ENCODE measurements at regions of chr9 and their contacts with region 1.

Region 1: DNA sequence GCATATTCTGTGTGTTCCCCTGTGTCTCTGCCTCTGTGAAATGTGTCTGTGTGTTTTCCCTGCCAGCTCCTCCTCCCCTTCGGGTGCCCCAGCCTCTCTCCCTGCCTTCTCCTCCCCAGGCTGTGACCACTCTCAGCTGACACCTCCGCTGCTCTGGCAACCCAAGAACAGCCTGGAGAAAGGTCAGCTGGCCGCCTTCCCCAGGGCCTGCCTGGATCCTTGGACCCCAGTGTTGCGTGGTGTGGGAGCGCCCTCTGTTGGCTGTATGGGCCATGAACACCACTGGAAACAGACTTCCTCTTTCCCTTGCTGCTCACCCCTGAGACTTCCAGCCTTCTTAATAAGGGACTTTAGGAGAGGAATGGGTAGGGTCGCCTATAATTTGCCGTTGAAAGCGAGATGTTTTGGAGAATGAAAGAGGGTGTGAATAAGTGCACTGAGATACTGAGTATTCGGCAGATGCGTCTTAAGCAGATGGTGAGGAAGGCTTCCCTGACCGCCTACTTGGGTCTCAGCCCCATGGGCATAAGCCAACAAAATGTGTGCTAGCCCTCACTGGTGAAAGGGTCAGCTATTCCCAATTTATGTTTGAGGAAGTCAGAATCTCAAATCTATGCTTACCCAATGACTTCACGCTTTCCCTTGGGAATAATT is 114.9 kb upstream of the TRIM32 start:
- DNase-seq: peak; percentile 64
- ATAC-seq: peak; percentile 84
- H3K4me3 ChIP-seq: no peak overlapping the region
- H3K27ac ChIP-seq: no peak overlapping the region
- H3K4me1 ChIP-seq: peaks cover 74% of the 10 kb centered on the region
- H3K27me3 ChIP-seq: no peaks in the 10 kb centered on the region
- CTCF ChIP-seq: peak; percentile 99
- EP300 ChIP-seq: no peak
- POLR2A ChIP-seq: no peak
- RAD21 ChIP-seq: peak; percentile 96

Region 2: GRCh38 chr9:115591584-115591984 is 980.6 kb before region 1 on chr9:
- CTCF ChIA-PET with region 1: no interaction called
- POLR2A ChIA-PET with region 1: no interaction called
- in situ Hi-C with region 1: no loop called
- intact Hi-C with region 1: loop called (anchors 5 kb)
- DNase-seq: peak; percentile 74
- ATAC-seq: peak; percentile 98
- H3K4me3 ChIP-seq: no peak overlapping the region
- H3K27ac ChIP-seq: no peak overlapping the region
- H3K4me1 ChIP-seq: no peaks in the 10 kb centered on the region
- H3K27me3 ChIP-seq: no peaks in the 10 kb centered on the region
- CTCF ChIP-seq: peak; percentile 70
- EP300 ChIP-seq: no peak
- POLR2A ChIP-seq: no peak
- RAD21 ChIP-seq: 0 out of 2 replicates have a peak, but pooled peaks have one; percentile 28

Region 3: DNA sequence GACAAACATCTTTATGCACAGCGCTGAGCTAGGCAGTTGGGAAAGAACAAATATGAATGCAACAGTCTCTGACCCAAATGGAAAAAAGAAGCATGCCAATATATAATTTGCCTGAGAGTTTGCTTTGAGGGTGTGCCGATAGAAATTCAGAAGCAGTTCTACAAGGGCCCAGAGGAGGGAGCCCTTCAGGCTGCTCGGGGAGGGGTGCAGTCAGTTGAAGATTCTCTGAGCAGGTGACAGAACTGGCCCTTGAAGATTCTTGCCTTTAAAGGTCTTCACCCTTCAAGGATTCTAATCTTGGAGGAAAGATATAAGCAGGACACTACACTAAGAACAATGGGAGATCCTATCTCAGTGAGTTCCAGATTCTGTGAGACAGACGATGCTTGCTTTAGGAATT is 422.4 kb before region 1 on chr9:
- CTCF ChIA-PET with region 1: interaction called, 14 read pairs
- POLR2A ChIA-PET with region 1: no interaction called
- in situ Hi-C with region 1: loop called (anchors 5 kb)
- intact Hi-C with region 1: loop called (anchors 1 kb)
- DNase-seq: no peak
- ATAC-seq: peak; percentile 77
- H3K4me3 ChIP-seq: no peak overlapping the region
- H3K27ac ChIP-seq: no peak overlapping the region
- H3K4me1 ChIP-seq: no peaks in the 10 kb centered on the region
- H3K27me3 ChIP-seq: peaks cover 3 to 15% of the 10 kb centered on the region in 2 experiments; a peak in 3 of 5 replicates
- CTCF ChIP-seq: peak; percentile 69
- EP300 ChIP-seq: no peak
- POLR2A ChIP-seq: no peak
- RAD21 ChIP-seq: no peak

Region 4: GRCh38 chr9:116337015-116337414 is 235.2 kb before region 1 on chr9:
- CTCF ChIA-PET with region 1: no interaction called
- POLR2A ChIA-PET with region 1: no interaction called
- in situ Hi-C with region 1: loop called (anchors 25 kb)
- intact Hi-C with region 1: no loop called
- DNase-seq: no peak
- ATAC-seq: peak; percentile 56
- H3K4me3 ChIP-seq: no peak overlapping the region
- H3K27ac ChIP-seq: no peak overlapping the region
- H3K4me1 ChIP-seq: peaks cover 56% of the 10 kb centered on the region
- H3K27me3 ChIP-seq: peaks cover 1 to 31% of the 10 kb centered on the region in 2 experiments; a peak in 4 of 5 replicates
- CTCF ChIP-seq: no peak
- EP300 ChIP-seq: no peak
- POLR2A ChIP-seq: no peak
- RAD21 ChIP-seq: no peak

Region 5: DNA sequence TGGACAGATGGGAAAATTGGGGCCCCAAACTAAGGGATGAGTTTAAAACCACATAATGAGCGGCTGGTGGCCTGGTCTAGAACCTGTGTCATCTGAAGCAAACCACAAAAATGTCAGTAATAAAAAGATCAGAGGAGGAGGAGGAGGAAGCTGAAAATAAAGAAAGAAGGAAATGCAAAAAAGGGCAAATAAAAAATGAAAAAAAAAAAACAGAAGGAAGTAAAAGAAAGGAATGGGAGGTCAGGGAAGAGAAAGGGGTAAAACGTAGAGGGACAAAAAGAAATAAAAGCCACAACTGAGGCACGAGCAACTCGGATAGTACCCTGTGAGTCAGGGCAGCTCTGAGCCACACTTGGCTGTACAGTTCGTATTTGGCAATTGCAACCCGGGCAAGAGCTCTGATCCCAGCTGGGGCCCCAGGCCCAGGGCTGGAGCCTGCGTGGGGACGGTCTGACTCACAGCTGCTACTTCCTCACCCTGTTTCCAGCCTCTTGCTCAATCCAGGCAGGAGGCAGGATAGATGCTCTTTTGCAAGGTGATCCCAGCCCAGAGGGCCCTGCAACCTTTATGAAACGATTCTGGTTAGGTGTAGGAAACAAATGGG is 23.1 kb before region 1 on chr9:
- CTCF ChIA-PET with region 1: no interaction called
- POLR2A ChIA-PET with region 1: interaction called, 19 read pairs
- in situ Hi-C with region 1: no loop called
- intact Hi-C with region 1: loop called (anchors 1 kb)
- DNase-seq: peak; percentile 91
- ATAC-seq: peak; percentile 95
- H3K4me3 ChIP-seq: no peak overlapping the region
- H3K27ac ChIP-seq: peak overlapping the region; percentile 38
- H3K4me1 ChIP-seq: peaks cover 57% of the 10 kb centered on the region
- H3K27me3 ChIP-seq: no peaks in the 10 kb centered on the region
- CTCF ChIP-seq: 0 out of 2 replicates have a peak, but pooled peaks have one; percentile 20
- EP300 ChIP-seq: peak; percentile 71 to 75; a peak in 3 of 4 replicates
- POLR2A ChIP-seq: no peak
- RAD21 ChIP-seq: peak; percentile 51